H1 (cell line): ENCODE measurements at regions of chr1 and their contacts with region 1.

Region 1: GRCh38 chr1:110605901-110606656 is at the start of gene KCNA2:
- DNase-seq: peak; percentile 50 to 77
- H3K4me3 ChIP-seq: peak within 1 kb of the TSS; percentile 54 to 69 (median 64)
- H3K27ac ChIP-seq: no peak within 1 kb of the TSS
- H3K4me1 ChIP-seq: peaks cover 5 to 15% (median 10%) of the 10 kb centered on the region in 4 experiments
- H3K27me3 ChIP-seq: peaks cover 36 to 78% (median 69%) of the 10 kb centered on the region in 4 experiments
- CTCF ChIP-seq: no peak
- EP300 ChIP-seq: no peak
- POLR2A ChIP-seq: no peak
- RAD21 ChIP-seq: no peak
- total RNA-seq, gene KCNA2: 0.75 and 0.78 TPM in 2 replicates

Region 2: DNA sequence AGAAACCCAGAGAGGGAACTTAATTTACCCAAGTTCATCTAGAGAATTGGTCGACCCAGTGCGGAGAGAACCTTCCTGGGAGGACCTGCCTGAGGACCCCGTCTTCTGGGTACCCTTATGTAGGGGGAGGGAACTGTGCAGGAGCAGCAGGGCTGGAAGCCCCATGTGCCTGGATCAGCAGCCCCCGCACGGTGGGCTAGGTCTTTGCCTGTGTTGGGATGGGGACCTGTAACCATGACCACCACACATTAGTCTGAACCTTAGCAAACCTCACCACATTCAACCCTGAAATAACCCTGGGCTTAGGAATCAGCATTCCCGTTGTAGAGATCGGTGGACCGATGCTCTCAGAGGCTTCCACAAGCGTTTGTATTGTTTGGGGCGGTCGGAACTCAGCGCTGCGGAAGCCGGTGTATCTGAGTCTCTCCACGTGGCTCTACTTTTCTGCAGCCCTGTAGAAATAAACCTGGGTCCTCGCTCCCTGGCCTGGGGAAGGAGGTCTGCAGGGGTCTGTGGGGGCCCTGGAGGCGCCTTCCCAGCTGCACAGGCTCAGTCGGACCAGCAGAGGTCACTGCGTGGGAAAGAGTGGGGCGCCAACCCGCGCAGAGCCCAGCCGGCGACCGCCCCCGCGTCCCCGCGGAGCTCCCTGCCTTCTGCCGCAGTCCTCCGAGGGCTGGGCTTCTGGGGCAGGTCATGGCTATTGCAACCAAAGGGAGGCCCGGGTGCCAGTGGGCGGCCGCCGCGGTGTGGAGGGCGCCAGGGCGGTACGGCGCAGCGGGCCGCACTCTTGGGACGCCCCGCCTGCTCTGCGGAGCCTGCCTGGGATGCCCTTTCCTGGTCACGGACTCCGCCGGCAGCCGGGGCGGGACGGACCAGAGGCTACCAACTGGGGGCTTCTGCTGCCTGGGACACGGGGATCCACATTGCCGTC is 50.9 kb before region 1 on chr1:
- CTCF ChIA-PET with region 1: interaction called, 41 read pairs
- POLR2A ChIA-PET with region 1: interaction called, 4 read pairs
- DNase-seq: peak in 1 of 2 experiments; percentile 81
- H3K4me3 ChIP-seq: peak overlapping the region; percentile 37 to 57 (median 44)
- H3K27ac ChIP-seq: no peak overlapping the region
- H3K4me1 ChIP-seq: peaks cover 0 to 8% (median under 1%) of the 10 kb centered on the region in 4 experiments; a peak in 3 of 7 replicates
- H3K27me3 ChIP-seq: peaks cover 3 to 32% (median 24%) of the 10 kb centered on the region in 4 experiments
- CTCF ChIP-seq: peak; percentile 73 to 81 (median 76)
- EP300 ChIP-seq: no peak
- POLR2A ChIP-seq: no peak
- RAD21 ChIP-seq: peak; percentile 32 to 52

Region 3: GRCh38 chr1:110594456-110595352 is 11.4 kb before region 1 on chr1:
- CTCF ChIA-PET with region 1: interaction called, 19 read pairs
- POLR2A ChIA-PET with region 1: no interaction called
- DNase-seq: no peak
- H3K4me3 ChIP-seq: no peak overlapping the region
- H3K27ac ChIP-seq: no peak overlapping the region
- H3K4me1 ChIP-seq: peaks cover 0 to 2% (median 0%) of the 10 kb centered on the region in 4 experiments; a peak in 1 of 7 replicates
- H3K27me3 ChIP-seq: peaks cover 0 to 12% (median 2%) of the 10 kb centered on the region in 4 experiments; a peak in 3 of 7 replicates
- CTCF ChIP-seq: no peak
- EP300 ChIP-seq: no peak
- POLR2A ChIP-seq: no peak
- RAD21 ChIP-seq: no peak

Region 4: GRCh38 chr1:110630839-110631663 is 25.0 kb after region 1 on chr1:
- CTCF ChIA-PET with region 1: no interaction called
- POLR2A ChIA-PET with region 1: no interaction called
- DNase-seq: peak; percentile 54 to 89
- H3K4me3 ChIP-seq: no peak overlapping the region
- H3K27ac ChIP-seq: no peak overlapping the region
- H3K4me1 ChIP-seq: no peaks in the 10 kb centered on the region
- H3K27me3 ChIP-seq: peaks cover 0 to 11% (median 0%) of the 10 kb centered on the region in 4 experiments; a peak in 2 of 7 replicates
- CTCF ChIP-seq: peak; percentile 85 to 93 (median 88)
- EP300 ChIP-seq: no peak
- POLR2A ChIP-seq: no peak
- RAD21 ChIP-seq: peak; percentile 83 to 86